ENCODE measurements at regions of chr1 and their contacts with region 1.

Region 1: DNA sequence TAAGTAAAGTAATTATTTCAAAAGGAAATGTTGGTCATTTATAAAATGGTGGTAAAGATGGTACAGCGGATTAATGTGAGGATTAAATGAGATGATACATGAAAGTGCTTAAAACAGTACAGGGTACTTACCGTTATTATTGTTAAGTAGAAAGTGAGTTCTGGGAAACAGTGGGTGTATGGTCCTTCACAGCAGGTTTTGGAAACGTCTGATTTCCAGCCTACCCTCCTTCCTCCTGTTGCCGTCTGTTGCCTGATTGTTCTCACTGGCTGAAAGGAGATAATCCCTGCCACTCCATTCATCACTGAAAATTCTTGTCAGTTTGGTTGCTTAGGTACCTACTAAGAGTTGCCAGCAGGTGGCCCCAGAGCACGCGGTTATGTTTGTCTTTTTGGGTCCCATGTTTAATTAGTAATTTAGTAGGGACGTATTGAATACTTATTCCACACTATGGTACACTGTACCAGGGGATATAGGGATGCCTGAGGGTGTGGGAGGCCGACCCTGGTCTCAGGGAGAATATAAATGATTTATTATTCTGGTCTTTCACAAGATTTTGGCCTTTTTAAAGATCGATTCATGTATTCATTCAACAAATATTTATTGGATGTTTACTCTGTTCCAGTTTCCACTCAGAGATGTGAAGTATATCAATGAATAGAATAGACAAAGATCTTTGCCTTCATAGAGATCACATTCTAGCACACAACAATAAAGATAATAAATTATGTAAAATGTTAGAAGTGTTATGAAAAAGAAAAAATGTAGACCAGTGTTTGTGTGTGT is 30.8 kb upstream of the RPTN start:
- DNase-seq: peak; percentile 54 to 68 (median 67)
- ATAC-seq: peak; percentile 71 to 78 (median 74)
- H3K4me3 ChIP-seq: peak overlapping the region in 2 of 3 donors; percentile 41 to 62
- H3K27ac ChIP-seq: no peak overlapping the region
- H3K4me1 ChIP-seq: peaks cover 0 to 18% (median 2%) of the 10 kb centered on the region in 4 donors
- H3K27me3 ChIP-seq: no peaks in the 10 kb centered on the region
- CTCF ChIP-seq: peak; percentile 66 to 73 (median 68)
- POLR2A ChIP-seq: no peak

Region 2: GRCh38 chr1:151920149-151920548 is 269.7 kb before region 1 on chr1:
- intact Hi-C with region 1: no loop called
- DNase-seq: no peak
- ATAC-seq: peak in 1 of 4 donors; percentile 16
- H3K4me3 ChIP-seq: no peak overlapping the region
- H3K27ac ChIP-seq: no peak overlapping the region
- H3K4me1 ChIP-seq: peaks cover 0 to 14% (median 3%) of the 10 kb centered on the region in 4 donors
- H3K27me3 ChIP-seq: no peaks in the 10 kb centered on the region
- CTCF ChIP-seq: no peak
- POLR2A ChIP-seq: no peak

Region 3: DNA sequence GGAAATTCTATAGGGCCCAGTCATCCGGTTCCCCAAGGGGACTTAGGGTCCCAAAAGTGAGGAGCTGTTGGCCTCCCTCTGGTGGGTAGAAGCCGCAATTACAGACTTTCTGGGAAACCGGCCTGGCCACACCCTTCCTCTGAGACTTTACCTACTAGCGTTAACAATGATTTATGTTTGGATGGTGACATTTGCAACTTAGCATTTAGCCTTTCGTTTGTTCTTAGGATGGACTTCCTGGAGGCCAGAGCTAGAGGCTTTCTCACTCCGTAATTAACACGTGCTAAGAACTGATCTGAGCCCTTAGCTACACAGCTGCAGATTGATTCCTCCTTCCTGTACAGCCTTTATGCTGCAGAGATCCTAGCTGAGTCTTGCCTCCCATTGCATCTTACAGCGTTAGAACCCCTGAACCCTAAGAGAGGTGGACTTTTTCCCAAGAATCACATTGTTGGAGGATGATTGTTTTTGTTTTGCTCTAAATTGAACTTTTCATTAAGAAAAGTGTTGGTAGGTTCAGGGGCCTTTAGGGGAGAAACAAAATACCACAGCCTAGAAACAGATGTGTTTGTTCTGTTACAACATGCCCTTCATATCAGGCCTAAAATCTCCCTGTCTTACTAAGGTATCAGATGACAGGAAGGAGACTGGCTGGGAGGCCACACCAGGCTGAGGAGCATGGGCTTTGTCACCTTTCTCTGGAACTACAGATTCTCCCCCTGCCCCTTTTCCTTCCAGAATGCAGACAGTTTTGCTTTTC is 155.0 kb before region 1 on chr1:
- intact Hi-C with region 1: no loop called
- DNase-seq: no peak
- ATAC-seq: peak; percentile 14 to 42 (median 20)
- H3K4me3 ChIP-seq: peak overlapping the region; percentile 27 to 51 (median 48)
- H3K27ac ChIP-seq: peak overlapping the region; percentile 75 to 89 (median 82)
- H3K4me1 ChIP-seq: peaks cover 0 to 16% (median 0%) of the 10 kb centered on the region in 4 donors
- H3K27me3 ChIP-seq: no peaks in the 10 kb centered on the region
- CTCF ChIP-seq: peak; percentile 33 to 46 (median 40)
- POLR2A ChIP-seq: no peak

Region 4: DNA sequence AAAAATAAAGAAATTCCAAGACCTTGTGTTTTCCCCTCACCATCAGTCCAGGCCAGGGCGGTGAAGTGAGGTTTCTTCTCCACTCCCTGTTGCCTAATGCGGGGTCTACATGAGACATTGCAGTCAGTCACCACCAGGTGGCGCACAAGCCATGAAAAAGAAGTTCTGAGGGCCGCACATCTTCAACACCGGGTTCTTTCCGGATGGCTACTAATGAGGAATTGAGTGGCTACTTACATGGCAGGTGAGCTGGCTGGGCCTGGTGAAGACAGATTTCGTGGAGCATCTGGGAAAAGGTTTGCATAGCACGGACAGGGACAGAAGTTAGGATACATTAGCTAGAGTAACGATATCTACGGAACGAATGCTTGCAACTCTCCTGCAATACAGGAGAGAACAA is 137.2 kb before region 1 on chr1:
- intact Hi-C with region 1: loop called (anchors 10 kb)
- DNase-seq: peak; percentile 82 to 85 (median 84)
- ATAC-seq: peak; percentile 67 to 78 (median 75)
- H3K4me3 ChIP-seq: no peak overlapping the region
- H3K27ac ChIP-seq: no peak overlapping the region
- H3K4me1 ChIP-seq: no peaks in the 10 kb centered on the region
- H3K27me3 ChIP-seq: no peaks in the 10 kb centered on the region
- CTCF ChIP-seq: peak; percentile 87 to 93 (median 89)
- POLR2A ChIP-seq: no peak

Region 5: DNA sequence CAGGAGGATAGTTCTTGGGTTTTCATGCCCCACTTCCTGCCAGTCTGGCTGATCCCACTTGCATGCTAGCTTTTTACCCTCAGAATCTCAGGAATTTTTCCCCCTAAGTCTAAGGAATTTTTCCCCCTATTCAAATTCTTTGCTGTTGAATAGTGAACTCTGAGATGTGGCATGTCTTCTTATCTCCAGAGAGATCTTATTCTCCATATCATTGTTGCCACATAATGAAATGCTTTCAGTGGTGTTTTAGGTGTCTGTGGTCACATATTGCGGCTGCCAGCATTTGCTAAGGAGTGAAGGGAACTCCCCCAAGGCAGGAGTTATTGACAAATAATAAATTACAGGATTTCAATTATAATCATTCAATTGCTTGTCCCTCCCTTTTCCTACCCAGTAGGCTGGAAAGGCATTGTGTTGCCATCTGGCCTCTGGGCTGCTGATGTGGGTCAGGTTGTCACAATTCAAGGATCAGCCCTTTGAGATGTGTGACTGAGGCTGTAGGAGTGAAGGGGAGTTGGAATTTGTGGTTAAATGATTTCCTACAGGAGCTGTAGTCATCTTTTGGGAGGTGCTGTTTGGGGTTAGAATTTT is 139.0 kb after region 1 on chr1:
- intact Hi-C with region 1: no loop called
- DNase-seq: no peak
- ATAC-seq: no peak
- H3K4me3 ChIP-seq: no peak overlapping the region
- H3K27ac ChIP-seq: no peak overlapping the region
- H3K4me1 ChIP-seq: no peaks in the 10 kb centered on the region
- H3K27me3 ChIP-seq: no peaks in the 10 kb centered on the region
- CTCF ChIP-seq: no peak
- POLR2A ChIP-seq: no peak

Region 6: GRCh38 chr1:152440635-152441471 is 251.0 kb after region 1 on chr1:
- intact Hi-C with region 1: loop called (anchors 10 kb)
- DNase-seq: peak; percentile 54 to 70 (median 67)
- ATAC-seq: peak; percentile 96 to 99 (median 98)
- H3K4me3 ChIP-seq: no peak overlapping the region
- H3K27ac ChIP-seq: no peak overlapping the region
- H3K4me1 ChIP-seq: no peaks in the 10 kb centered on the region
- H3K27me3 ChIP-seq: no peaks in the 10 kb centered on the region
- CTCF ChIP-seq: peak; percentile 76 to 89 (median 84)
- POLR2A ChIP-seq: no peak